Left colon (tissue), 2 donors: ENCODE measurements at regions of chr5 and their contacts with region 1.

Region 1: DNA sequence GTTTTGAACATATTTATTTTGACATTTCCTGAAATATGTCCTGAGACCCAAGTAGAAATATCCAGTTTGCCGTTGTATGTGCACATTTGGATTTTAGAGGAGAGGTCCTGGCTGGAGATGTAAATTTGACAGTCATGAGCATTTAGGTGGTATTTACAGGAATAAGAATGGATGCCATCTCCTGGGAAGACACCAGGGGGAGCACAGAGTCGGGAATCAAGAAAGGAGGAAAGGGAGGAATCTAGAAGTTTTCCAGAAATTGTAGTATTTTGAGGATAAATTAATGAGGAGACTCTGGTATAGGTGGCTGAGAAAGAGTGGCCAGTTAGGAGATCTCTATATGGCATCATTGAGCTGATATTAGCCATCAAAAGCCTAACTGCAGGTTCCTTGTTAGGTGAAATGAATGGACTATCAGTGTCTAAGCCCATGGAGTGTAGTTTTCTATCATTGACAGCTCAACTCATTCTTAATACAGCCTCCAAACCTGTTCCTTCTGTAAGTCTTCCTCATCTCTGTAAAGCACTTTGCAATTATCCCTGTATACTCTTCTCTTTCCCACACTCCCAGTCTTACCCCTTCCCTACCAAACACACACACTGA is 7.2 kb downstream of the GAPT start:
- DNase-seq: peak in 1 of 2 donors; percentile 35
- ATAC-seq: peak; percentile 42

Region 2: DNA sequence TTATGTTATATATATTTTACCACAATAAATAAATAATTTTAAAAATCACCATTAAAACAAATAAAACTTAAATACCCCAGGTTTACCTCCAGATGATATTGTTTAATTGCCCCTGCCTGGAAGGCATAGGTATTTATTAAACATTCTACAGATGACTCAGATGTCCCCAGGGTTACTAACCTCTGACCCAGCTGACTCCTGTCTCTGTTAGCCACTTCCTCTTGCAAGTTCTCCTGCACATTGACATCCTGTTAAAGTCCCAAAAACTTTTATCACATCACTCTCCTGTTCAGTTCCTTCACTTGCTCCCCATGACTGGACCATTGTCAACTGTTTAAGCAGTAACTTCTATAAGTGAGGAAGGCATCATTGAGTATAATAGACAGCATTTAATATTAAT is 47.5 kb after region 1 on chr5:
- intact Hi-C with region 1: no loop called
- DNase-seq: no peak
- ATAC-seq: no peak

Region 3: GRCh38 chr5:58849921-58850667 is 351.7 kb after region 1 on chr5:
- intact Hi-C with region 1: loop called in 1 of 2 experiments (anchors 5 kb)
- DNase-seq: peak; percentile 16 to 29
- ATAC-seq: peak; percentile 89